Gastrocnemius medialis (tissue), 4 donors: ENCODE measurements at regions of chr4 and their contacts with region 1.

Region 1: GRCh38 chr4:6250235-6250983 is 19.2 kb upstream of the WFS1 start:
- DNase-seq: no peak
- ATAC-seq: peak; percentile 63 to 65
- H3K4me3 ChIP-seq: no peak overlapping the region
- H3K27ac ChIP-seq: no peak overlapping the region
- H3K4me1 ChIP-seq: no peaks in the 10 kb centered on the region
- H3K27me3 ChIP-seq: peaks cover 11 to 20% (median 18%) of the 10 kb centered on the region in 3 donors
- CTCF ChIP-seq: peak; percentile 67 to 86 (median 83)
- POLR2A ChIP-seq: no peak

Region 2: DNA sequence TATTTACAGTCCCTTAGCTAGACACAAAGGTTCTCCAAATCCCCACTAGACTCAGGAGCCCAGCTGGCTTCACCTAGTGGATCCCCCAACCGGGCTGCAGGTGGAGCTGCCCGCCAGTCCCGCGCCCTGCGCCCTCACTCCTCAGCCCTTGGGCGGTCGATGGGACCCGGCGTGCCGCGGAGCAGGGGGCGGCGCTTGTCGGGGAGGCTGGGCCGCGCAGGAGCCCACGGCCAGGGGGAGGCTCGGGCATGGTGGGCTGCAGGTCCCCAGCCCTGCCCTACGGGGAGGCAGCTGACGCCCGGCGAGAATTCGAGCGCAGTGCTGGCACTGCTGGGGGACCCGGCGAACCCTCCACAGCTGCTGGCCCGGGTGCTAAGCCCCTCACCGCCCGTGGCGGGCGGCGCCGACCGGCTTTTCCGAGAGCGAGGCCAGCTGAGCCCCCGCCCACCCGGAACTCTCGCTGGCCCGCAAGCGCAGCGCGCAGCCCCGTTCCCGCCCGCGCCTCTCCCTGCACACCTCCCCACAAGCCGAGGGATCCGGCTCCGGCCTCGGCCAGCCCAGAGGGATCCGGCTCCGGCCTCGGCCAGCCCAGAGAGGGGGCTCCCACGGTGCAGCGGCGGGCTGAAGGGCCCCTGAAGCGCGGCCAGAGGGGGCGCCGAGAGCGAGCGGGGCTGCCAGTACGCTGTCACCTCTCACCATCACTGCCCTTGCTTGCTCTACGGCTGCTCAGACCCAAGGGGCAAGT is 58.7 kb after region 1 on chr4:
- in situ Hi-C with region 1: no loop called
- intact Hi-C with region 1: no loop called
- DNase-seq: no peak
- ATAC-seq: no peak
- H3K4me3 ChIP-seq: peak overlapping the region; percentile 27 to 42 (median 41)
- H3K27ac ChIP-seq: peak overlapping the region in 1 of 4 donors; percentile 7
- H3K4me1 ChIP-seq: no peaks in the 10 kb centered on the region
- H3K27me3 ChIP-seq: peaks cover 0 to 13% (median 3%) of the 10 kb centered on the region in 3 donors
- CTCF ChIP-seq: no peak
- POLR2A ChIP-seq: no peak

Region 3: DNA sequence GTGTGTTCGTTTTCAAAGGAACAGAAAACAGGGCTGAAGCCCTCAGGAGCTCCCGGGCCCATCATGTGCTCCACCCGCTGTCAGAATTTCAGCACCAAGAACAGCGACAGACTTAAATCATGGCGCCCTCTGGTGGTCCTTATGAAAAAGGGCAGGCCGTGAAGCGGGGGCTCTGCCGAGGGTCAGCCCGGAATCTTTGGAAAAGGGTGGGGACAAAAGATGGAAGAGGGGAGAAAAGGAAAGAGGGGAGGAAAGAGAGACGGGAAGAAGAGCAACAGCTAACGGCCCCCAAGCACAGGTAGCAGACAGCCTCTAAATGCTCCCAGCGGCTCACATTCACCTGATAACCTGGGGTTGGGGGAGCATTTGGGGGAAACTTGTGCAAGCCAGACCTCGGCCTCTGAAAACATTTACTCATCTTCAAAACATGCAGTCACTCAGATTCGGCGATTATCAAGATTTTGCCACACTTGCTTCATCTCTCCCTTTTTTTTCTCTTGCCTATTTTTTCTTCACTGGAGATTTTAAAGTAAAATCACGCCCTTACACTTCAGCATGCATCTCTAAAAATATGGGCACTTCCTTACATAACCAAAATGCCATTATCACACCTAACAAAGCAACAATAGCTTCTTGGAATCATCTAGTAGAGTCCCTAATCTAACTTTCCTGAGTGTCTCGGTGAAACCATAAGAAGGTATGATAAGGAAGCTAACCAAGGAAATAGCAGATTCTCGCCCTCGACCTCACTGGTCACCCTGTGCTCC is 296.5 kb after region 1 on chr4:
- in situ Hi-C with region 1: no loop called
- intact Hi-C with region 1: loop called (anchors 5 kb)
- DNase-seq: no peak
- ATAC-seq: peak in 1 of 2 donors; percentile 24
- H3K4me3 ChIP-seq: no peak overlapping the region
- H3K27ac ChIP-seq: no peak overlapping the region
- H3K4me1 ChIP-seq: no peaks in the 10 kb centered on the region
- H3K27me3 ChIP-seq: peaks cover 0 to 3% (median 3%) of the 10 kb centered on the region in 3 donors
- CTCF ChIP-seq: peak in 4 of 5 experiments; percentile 36 to 62 (median 44)
- POLR2A ChIP-seq: no peak